ENCODE measurements at regions of chr17 and their contacts with region 1.

Region 1: GRCh38 chr17:53807286-53807685 is 15.4 kb upstream of the KIF2B start:
- DNase-seq: no peak
- ATAC-seq: no peak
- H3K4me3 ChIP-seq: no peak overlapping the region
- H3K27ac ChIP-seq: no peak overlapping the region
- H3K4me1 ChIP-seq: no peaks in the 10 kb centered on the region
- H3K27me3 ChIP-seq: no peaks in the 10 kb centered on the region
- CTCF ChIP-seq: no peak

Region 2: DNA sequence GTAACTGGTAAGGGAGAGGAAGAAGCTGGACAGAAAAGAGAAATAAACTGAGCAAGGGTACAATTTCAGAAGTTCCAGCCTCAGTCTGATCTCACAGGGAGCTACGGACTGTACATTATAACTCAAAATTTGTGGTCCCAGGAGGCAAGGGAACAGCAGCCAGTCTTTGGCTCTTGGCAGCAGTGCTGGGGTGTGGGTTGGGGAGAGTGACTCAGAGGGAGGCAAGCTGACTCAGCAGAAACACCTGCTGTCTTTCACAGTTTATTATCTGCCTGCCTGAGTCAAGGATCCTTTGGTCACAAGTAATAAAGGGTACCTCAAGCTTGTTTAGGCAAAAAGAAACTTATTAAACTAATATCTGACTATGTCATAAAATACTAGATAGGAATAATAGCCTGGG is 58.1 kb before region 1 on chr17:
- intact Hi-C with region 1: loop called in 1 of 10 experiments (anchors 10 kb)
- DNase-seq: no peak
- ATAC-seq: no peak
- H3K4me3 ChIP-seq: no peak overlapping the region
- H3K27ac ChIP-seq: no peak overlapping the region
- H3K4me1 ChIP-seq: no peaks in the 10 kb centered on the region
- H3K27me3 ChIP-seq: peaks cover 0 to 5% (median 0%) of the 10 kb centered on the region in 7 donors
- CTCF ChIP-seq: no peak